ENCODE measurements at regions of chr16 and their contacts with region 1.

Region 1: GRCh38 chr16:57734925-57735754 is 430 bp upstream of the KATNB1 start:
- DNase-seq: peak; percentile 88 to 100 (median 98)
- ATAC-seq: peak; percentile 96
- H3K4me3 ChIP-seq: peak overlapping the region; percentile 93
- H3K4me3 Mint-ChIP-seq: peak overlapping the region; percentile 90 to 99 (median 96)
- H3K27ac ChIP-seq: peak overlapping the region; percentile 80
- H3K27ac Mint-ChIP-seq: peak overlapping the region; percentile 81 to 98 (median 93)
- H3K4me1 ChIP-seq: peaks cover 12 to 14% of the 10 kb centered on the region in 2 donors
- H3K4me1 Mint-ChIP-seq: peaks cover 14 to 38% (median 26%) of the 10 kb centered on the region in 7 donors
- H3K27me3 ChIP-seq: no peaks in the 10 kb centered on the region
- H3K27me3 Mint-ChIP-seq: no peaks in the 10 kb centered on the region

Region 2: GRCh38 chr16:56450986-56451752 is 1284.0 kb before region 1 on chr16 and contains the starts of genes NUDT21 and OGFOD1:
- CTCF ChIA-PET with region 1: no interaction called
- POLR2A ChIA-PET with region 1: interaction called, 3 read pairs
- intact Hi-C with region 1: loop called in 1 of 2 experiments (anchors 2 kb)
- DNase-seq: peak; percentile 67 to 96 (median 93)
- ATAC-seq: peak; percentile 99
- H3K4me3 ChIP-seq: peak within 1 kb of the TSS; percentile 96
- H3K4me3 Mint-ChIP-seq: peak within 1 kb of the TSS; percentile 94 to 100 (median 97)
- H3K27ac ChIP-seq: peak within 1 kb of the TSS; percentile 92
- H3K27ac Mint-ChIP-seq: peak within 1 kb of the TSS; percentile 92 to 98 (median 93)
- H3K4me1 ChIP-seq: peaks cover 24 to 42% of the 10 kb centered on the region in 2 donors
- H3K4me1 Mint-ChIP-seq: peaks cover 50 to 77% (median 64%) of the 10 kb centered on the region in 7 donors
- H3K27me3 ChIP-seq: no peaks in the 10 kb centered on the region
- H3K27me3 Mint-ChIP-seq: no peaks in the 10 kb centered on the region
- total RNA-seq, gene NUDT21: 74.0 to 191 (median 97.5) TPM
- total RNA-seq, gene OGFOD1: 23.8 to 51.8 (median 42.1) TPM

Region 3: DNA sequence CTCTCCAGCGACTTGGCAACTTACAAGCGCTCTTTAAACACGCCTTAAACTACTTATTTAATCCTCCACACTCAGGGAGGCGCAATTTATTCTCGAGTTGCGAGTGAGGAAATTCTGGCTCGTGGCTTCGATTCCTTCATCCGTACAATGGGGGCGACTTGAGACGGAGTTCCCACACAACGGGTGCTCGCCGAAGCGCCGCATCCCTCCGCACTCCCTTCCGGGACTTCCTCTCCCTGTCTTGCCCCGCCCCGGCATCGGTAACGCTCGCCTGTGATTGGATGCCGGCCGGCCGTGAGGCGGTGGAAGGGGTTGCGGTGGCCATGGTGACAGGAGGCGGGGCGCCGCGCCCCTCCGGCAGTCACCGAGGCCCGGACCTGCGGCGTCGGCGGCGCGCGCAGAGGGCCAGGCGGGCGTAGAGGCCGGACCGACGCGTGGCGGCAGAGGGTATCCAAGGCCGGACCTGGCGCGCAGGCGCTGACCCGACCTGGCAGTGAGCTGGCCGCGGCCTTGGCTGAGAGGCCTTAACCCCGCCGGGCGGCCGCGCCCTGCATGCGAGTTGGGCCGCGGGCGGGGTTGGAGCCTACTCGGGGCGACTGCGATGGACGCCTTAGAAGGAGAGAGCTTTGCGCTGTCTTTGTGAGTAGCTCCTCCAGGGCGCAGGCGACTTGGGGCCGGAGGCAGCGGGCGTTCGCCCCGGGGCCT is 490.2 kb before region 1 on chr16 and contains the start of gene ARL2BP:
- CTCF ChIA-PET with region 1: no interaction called
- POLR2A ChIA-PET with region 1: no interaction called
- intact Hi-C with region 1: loop called in 1 of 2 experiments (anchors 1 kb)
- DNase-seq: peak; percentile 90 to 98 (median 96)
- ATAC-seq: peak; percentile 97
- H3K4me3 ChIP-seq: peak within 1 kb of the TSS; percentile 44
- H3K4me3 Mint-ChIP-seq: peak within 1 kb of the TSS; percentile 81 to 97 (median 89)
- H3K27ac ChIP-seq: peak within 1 kb of the TSS; percentile 84
- H3K27ac Mint-ChIP-seq: peak within 1 kb of the TSS; percentile 88 to 97 (median 93)
- H3K4me1 ChIP-seq: peaks cover 5 to 6% of the 10 kb centered on the region in 2 donors
- H3K4me1 Mint-ChIP-seq: peaks cover 14 to 25% (median 17%) of the 10 kb centered on the region in 7 donors
- H3K27me3 ChIP-seq: no peaks in the 10 kb centered on the region
- H3K27me3 Mint-ChIP-seq: no peaks in the 10 kb centered on the region
- total RNA-seq, gene ARL2BP: 32.6 to 57.7 (median 37.9) TPM

Region 4: DNA sequence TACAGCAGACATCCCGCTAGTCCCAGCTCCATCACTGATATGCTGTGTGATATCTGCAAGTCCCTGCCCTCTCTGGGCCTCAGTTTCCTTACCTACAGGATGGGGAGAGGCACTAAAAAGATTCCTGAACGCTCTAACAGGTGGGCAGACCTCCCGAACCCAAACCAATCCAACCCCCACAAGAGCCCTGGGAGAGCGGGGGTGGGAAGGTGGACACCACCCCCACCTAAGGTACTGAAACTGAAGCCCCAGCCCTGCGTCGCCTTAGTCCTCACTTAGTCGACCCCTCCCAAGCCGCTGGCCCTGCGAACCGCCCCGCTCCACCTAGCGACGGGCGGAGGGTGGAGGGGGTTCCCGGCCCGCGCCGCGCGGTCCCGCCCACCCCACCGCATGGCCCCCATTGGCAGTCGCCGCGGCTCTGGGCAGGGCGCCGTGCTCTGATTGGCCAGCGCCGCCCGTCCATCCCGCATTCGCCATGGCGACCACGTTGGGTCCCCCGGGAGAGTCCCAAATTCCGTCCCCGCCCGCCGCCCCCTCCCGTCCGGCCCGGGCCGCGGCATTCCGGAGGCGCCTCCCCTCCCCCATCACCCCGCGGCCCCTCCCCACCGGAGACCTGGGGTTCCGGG is 199.3 kb before region 1 on chr16:
- CTCF ChIA-PET with region 1: no interaction called
- POLR2A ChIA-PET with region 1: interaction called, 3 read pairs
- intact Hi-C with region 1: loop called (anchors 1 kb)
- DNase-seq: peak; percentile 77 to 94 (median 87)
- ATAC-seq: peak; percentile 95
- H3K4me3 ChIP-seq: peak overlapping the region; percentile 44
- H3K4me3 Mint-ChIP-seq: peak overlapping the region; percentile 77 to 89 (median 82)
- H3K27ac ChIP-seq: peak overlapping the region; percentile 93
- H3K27ac Mint-ChIP-seq: peak overlapping the region; percentile 82 to 96 (median 94)
- H3K4me1 ChIP-seq: peaks cover 54 to 60% of the 10 kb centered on the region in 2 donors
- H3K4me1 Mint-ChIP-seq: peaks cover 57 to 79% (median 74%) of the 10 kb centered on the region in 7 donors
- H3K27me3 ChIP-seq: no peaks in the 10 kb centered on the region
- H3K27me3 Mint-ChIP-seq: no peaks in the 10 kb centered on the region

Region 5: GRCh38 chr16:57653936-57654335 is 81.2 kb before region 1 on chr16:
- CTCF ChIA-PET with region 1: interaction called, 4 read pairs
- POLR2A ChIA-PET with region 1: interaction called, 4 read pairs
- intact Hi-C with region 1: loop called (anchors 1 to 5 kb)
- DNase-seq: no peak
- ATAC-seq: no peak
- H3K4me3 ChIP-seq: no peak overlapping the region
- H3K4me3 Mint-ChIP-seq: no peak overlapping the region
- H3K27ac ChIP-seq: no peak overlapping the region
- H3K27ac Mint-ChIP-seq: no peak overlapping the region
- H3K4me1 ChIP-seq: peaks cover 0 to 24% of the 10 kb centered on the region in 2 donors
- H3K4me1 Mint-ChIP-seq: peaks cover 6 to 22% (median 9%) of the 10 kb centered on the region in 7 donors
- H3K27me3 ChIP-seq: no peaks in the 10 kb centered on the region
- H3K27me3 Mint-ChIP-seq: no peaks in the 10 kb centered on the region

Region 6: GRCh38 chr16:57810197-57811031 is 75.3 kb after region 1 on chr16:
- CTCF ChIA-PET with region 1: no interaction called
- POLR2A ChIA-PET with region 1: no interaction called
- intact Hi-C with region 1: loop called in 1 of 2 experiments (anchors 1 kb)
- DNase-seq: peak in 2 of 9 donors; percentile 20 to 79
- ATAC-seq: peak; percentile 97
- H3K4me3 ChIP-seq: peak overlapping the region; percentile 37
- H3K4me3 Mint-ChIP-seq: peak overlapping the region in 1 of 10 donors; percentile 70
- H3K27ac ChIP-seq: no peak overlapping the region
- H3K27ac Mint-ChIP-seq: peak overlapping the region in 4 of 9 donors; percentile 10 to 91 (median 16)
- H3K4me1 ChIP-seq: peaks cover 8 to 39% of the 10 kb centered on the region in 2 donors
- H3K4me1 Mint-ChIP-seq: peaks cover 8 to 30% (median 17%) of the 10 kb centered on the region in 7 donors
- H3K27me3 ChIP-seq: no peaks in the 10 kb centered on the region
- H3K27me3 Mint-ChIP-seq: peaks cover 23 to 40% (median 28%) of the 10 kb centered on the region in 5 donors

Region 7: DNA sequence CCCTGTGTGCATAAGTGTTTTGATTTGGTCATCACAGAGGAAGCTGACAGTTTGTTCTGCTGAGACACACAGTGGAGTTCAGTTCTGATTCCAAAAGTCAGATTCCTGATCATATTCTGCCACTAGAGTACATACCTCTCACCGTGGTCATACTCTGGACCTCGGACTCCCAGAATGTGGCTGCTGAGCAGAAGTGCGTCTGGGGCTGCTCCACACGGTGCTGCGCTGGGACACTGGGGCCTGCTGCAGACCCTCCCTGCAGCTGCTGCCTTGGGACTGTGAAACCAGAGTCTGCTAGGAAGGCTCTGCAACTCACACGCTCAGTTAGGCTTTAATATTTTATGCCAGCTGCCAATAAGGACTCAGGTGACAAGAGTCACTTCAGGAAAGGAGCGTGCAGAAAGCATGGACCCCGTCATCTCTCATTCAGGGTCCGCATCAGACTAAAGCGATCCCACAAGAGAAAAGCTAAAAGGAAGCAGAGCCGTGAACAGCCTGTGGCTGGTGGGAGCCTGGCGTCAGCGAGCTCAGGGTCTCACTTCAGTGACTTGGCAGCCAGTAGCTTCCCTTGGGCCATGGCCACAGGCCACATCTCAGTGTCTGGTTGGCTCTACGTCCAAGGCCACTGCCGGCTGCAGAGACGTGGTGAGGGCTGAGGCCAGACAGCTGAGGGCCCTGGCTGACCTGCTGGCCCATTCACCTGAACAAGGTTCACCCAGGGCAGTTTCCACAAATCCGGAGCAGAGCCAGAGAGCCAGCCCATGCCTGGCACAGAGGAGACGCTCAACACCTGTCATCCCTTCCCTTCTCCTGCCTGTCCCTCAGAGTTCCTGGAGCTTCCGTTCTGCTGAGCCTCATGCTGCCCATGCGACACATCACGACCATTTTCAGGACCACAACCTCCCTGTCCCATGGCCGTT is 91.8 kb after region 1 on chr16:
- CTCF ChIA-PET with region 1: no interaction called
- POLR2A ChIA-PET with region 1: no interaction called
- intact Hi-C with region 1: no loop called
- DNase-seq: no peak
- ATAC-seq: no peak
- H3K4me3 ChIP-seq: no peak overlapping the region
- H3K4me3 Mint-ChIP-seq: no peak overlapping the region
- H3K27ac ChIP-seq: no peak overlapping the region
- H3K27ac Mint-ChIP-seq: no peak overlapping the region
- H3K4me1 ChIP-seq: no peaks in the 10 kb centered on the region
- H3K4me1 Mint-ChIP-seq: no peaks in the 10 kb centered on the region
- H3K27me3 ChIP-seq: no peaks in the 10 kb centered on the region
- H3K27me3 Mint-ChIP-seq: peaks cover 0 to 25% (median 4%) of the 10 kb centered on the region in 5 donors

Region 8: DNA sequence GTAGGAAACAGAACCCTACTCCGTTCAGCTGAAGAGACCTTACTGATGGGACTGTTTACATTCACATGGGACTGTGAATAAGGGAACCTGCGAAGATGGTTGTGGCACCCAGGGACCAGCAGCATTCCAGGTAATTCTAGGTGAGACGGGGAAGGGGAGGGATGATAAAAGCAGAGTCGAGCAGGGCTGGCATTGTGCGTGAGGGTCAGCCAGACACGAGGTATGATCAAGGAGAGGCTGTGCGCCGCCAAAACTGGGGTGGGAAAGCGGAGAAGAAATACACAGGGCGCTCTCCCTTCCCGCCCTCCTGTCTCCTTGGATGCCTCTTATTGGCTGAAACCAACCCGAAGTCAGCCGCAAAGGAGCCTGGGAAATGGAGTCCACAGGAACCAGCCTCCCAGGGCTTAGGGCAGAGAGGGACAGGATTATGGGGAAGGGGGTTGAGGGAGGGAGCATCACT is 501.1 kb after region 1 on chr16:
- CTCF ChIA-PET with region 1: no interaction called
- POLR2A ChIA-PET with region 1: interaction called, 3 read pairs
- intact Hi-C with region 1: loop called in 1 of 2 experiments (anchors 2 kb)
- DNase-seq: peak; percentile 18 to 56 (median 45)
- ATAC-seq: peak; percentile 89
- H3K4me3 ChIP-seq: peak overlapping the region; percentile 64
- H3K4me3 Mint-ChIP-seq: peak overlapping the region; percentile 82 to 93 (median 89)
- H3K27ac ChIP-seq: no peak overlapping the region
- H3K27ac Mint-ChIP-seq: peak overlapping the region in 4 of 9 donors; percentile 5 to 36 (median 23)
- H3K4me1 ChIP-seq: peaks cover 8 to 10% of the 10 kb centered on the region in 2 donors
- H3K4me1 Mint-ChIP-seq: peaks cover 0 to 17% (median 13%) of the 10 kb centered on the region in 7 donors
- H3K27me3 ChIP-seq: no peaks in the 10 kb centered on the region
- H3K27me3 Mint-ChIP-seq: peaks cover 5 to 47% (median 21%) of the 10 kb centered on the region in 5 donors

Measured in naive thymus-derived CD4-positive, alpha-beta T cell (primary cell).